Dorsolateral prefrontal cortex (tissue), 120 donors: ENCODE measurements at regions of chr17 and their contacts with region 1.

Region 1: DNA sequence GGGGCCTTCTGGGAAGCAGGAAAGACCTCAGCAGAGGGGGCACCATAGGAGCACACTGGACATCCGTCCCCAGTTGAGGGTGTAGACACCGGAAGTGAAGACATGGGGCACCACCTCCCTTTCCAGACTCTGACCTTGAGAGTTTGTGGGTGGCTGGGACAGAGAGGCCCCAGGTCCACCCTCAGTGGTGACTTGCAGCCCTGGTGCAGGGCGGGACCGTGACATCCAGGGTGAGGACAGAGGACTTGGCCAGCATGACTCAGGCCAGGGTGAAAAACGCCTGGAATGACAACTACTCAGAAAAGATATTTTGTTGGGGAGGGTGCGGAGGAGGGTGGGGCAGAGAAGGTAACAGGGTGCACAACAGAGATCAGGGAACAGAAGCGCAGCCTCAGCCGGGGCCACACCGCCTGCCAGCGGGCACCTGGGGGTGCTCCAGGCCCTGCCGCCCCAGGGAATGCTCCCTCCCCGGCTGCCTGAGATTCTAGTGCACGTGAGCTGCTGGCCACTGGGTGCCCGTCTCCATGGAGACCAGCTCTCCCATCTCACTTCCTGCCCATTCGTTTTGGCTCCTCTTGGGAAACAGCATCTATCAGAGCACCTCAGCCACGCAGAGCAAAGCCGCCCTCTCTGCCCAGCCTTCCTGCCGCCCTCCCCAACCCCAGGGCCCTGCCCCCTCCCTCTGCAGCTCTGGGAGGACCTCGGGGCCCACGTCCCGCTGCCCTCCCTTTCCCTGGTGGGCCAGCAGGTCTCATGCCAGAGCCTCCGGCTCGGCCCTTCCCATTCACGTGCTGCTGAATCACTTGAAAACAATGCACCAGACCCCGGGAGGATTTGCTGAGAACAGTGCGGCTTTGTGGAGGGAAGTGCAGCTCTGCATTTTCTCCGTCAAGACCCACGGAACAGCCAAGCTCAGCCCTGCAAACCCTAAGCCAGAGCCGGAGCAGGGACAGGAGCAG is 19.6 kb downstream of the CEP295NL start:
- DNase-seq: peak; percentile 60 to 91 (median 89)
- H3K4me3 ChIP-seq: peak overlapping the region; percentile 15 to 65 (median 48)
- H3K27ac ChIP-seq: peak overlapping the region; percentile 89 to 100 (median 99)
- H3K27me3 ChIP-seq: no peaks in the 10 kb centered on the region
- CTCF ChIP-seq: peak in 6 of 56 donors; percentile 5 to 32 (median 14)

Region 2: GRCh38 chr17:78798695-78799559 is 84.5 kb before region 1 on chr17:
- intact Hi-C with region 1: no loop called
- DNase-seq: no peak
- H3K4me3 ChIP-seq: no peak overlapping the region
- H3K27ac ChIP-seq: peak overlapping the region in 43 of 59 donors; percentile 2 to 87 (median 43)
- H3K27me3 ChIP-seq: no peaks in the 10 kb centered on the region
- CTCF ChIP-seq: peak; percentile 34 to 76 (median 62)

Region 3: DNA sequence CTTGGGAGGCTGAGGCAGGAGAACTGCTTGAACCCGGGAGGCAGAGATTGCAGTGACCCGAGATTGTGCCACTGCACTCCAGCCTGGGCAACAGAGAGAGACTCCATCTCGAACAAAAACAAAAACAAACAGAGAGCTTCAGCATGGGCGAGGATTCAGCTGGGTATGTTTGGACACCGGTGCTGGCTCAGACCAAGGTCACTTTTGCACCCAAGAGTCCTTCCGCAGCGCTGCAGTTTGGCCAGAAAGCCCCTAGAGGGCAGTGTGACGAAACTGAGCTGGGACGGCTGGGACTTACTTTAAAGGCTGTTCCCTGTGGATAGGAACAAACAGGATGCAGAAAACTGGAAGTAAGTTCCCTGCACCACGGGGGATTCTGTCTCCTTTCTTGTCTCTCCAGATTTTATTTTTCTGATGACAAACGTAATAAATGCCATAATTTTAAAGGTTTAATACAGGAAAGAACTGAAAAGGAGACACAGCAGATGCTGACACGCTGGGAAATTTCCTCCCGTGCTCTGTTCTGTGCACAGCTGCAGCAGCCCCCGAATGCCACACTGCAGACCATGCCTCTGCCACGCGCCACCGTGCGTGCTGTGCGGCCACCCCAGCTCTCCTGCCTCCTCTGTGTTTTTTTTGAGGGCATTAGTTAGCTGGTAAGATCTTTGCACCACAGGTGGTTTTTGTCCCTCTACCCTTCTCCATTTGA is 17.6 kb before region 1 on chr17:
- intact Hi-C with region 1: no loop called
- DNase-seq: peak; percentile 77 to 93 (median 86)
- H3K4me3 ChIP-seq: peak overlapping the region in 39 of 59 donors; percentile 8 to 49 (median 28)
- H3K27ac ChIP-seq: peak overlapping the region in 58 of 59 donors; percentile 12 to 100 (median 82)
- H3K27me3 ChIP-seq: no peaks in the 10 kb centered on the region
- CTCF ChIP-seq: peak; percentile 56 to 99 (median 95)

Region 4: DNA sequence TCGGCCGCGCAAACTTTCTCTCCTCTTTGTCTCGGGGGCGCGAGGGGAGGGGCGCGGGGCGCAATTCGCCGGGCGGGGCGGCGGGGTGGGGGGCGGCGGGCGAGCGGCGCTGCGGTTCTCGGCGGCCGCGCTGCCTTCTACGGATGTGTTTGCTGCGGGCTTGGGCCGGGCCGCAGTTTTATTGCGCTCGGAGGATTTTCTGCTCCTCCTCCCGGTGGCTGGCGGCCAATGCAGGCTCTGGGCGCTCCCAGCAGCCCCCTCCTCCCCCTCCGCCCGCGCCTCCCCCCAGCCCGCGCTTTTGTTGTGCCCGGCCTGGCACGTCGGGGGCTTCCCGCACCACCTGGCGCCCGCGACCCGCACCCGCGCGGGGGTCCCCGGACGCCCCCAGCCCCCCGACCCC is 41.8 kb after region 1 on chr17 and contains the start of gene TIMP2:
- intact Hi-C with region 1: loop called in 1 of 2 experiments (anchors 5 kb)
- DNase-seq: peak; percentile 68 to 94 (median 88)
- H3K4me3 ChIP-seq: peak within 1 kb of the TSS; percentile 54 to 82 (median 70)
- H3K27ac ChIP-seq: peak within 1 kb of the TSS; percentile 83 to 99 (median 95)
- H3K27me3 ChIP-seq: no peaks in the 10 kb centered on the region
- CTCF ChIP-seq: peak in 38 of 56 donors; percentile 13 to 49 (median 32)
- total RNA-seq, gene TIMP2: 97.8 to 275 (median 166) TPM

Region 5: GRCh38 chr17:79053251-79053925 is 169.9 kb after region 1 on chr17:
- intact Hi-C with region 1: no loop called
- DNase-seq: peak in 1 of 10 donors; percentile 9
- H3K4me3 ChIP-seq: no peak overlapping the region
- H3K27ac ChIP-seq: no peak overlapping the region
- H3K27me3 ChIP-seq: peaks cover 0 to 5% (median 0%) of the 10 kb centered on the region in 45 donors
- CTCF ChIP-seq: no peak